A549 (cell line): ENCODE measurements at regions of chr6 and their contacts with region 1.

Region 1: GRCh38 chr6:722077-722524 is 29.2 kb upstream of the EXOC2 start:
- DNase-seq: peak; percentile 78 to 79
- ATAC-seq: peak; percentile 90 to 97
- H3K4me3 ChIP-seq: no peak overlapping the region
- H3K27ac ChIP-seq: no peak overlapping the region
- H3K4me1 ChIP-seq: no peaks in the 10 kb centered on the region
- CTCF ChIP-seq: peak; percentile 78
- EP300 ChIP-seq: no peak
- POLR2A ChIP-seq: no peak
- RAD21 ChIP-seq: peak; percentile 51 to 54; a peak in 4 of 5 replicates

Region 2: GRCh38 chr6:313087-313486 is 409.0 kb before region 1 on chr6:
- CTCF ChIA-PET with region 1: no interaction called
- POLR2A ChIA-PET with region 1: no interaction called
- DNase-seq: no peak
- ATAC-seq: no peak
- H3K4me3 ChIP-seq: no peak overlapping the region
- H3K27ac ChIP-seq: no peak overlapping the region
- H3K4me1 ChIP-seq: no peaks in the 10 kb centered on the region
- CTCF ChIP-seq: no peak
- EP300 ChIP-seq: no peak
- POLR2A ChIP-seq: no peak
- RAD21 ChIP-seq: no peak

Region 3: GRCh38 chr6:701700-702479 is 20.2 kb before region 1 on chr6:
- CTCF ChIA-PET with region 1: interaction called, 33 read pairs
- POLR2A ChIA-PET with region 1: no interaction called
- DNase-seq: no peak
- ATAC-seq: peak in 1 of 2 experiments; percentile 45; a peak in 1 of 6 replicates
- H3K4me3 ChIP-seq: no peak overlapping the region
- H3K27ac ChIP-seq: no peak overlapping the region
- H3K4me1 ChIP-seq: 0 out of 3 replicates have a peak, but pooled peaks cover 4% of the 10 kb centered on the region
- CTCF ChIP-seq: no peak
- EP300 ChIP-seq: no peak
- POLR2A ChIP-seq: no peak
- RAD21 ChIP-seq: no peak

Region 4: GRCh38 chr6:710601-711571 is 11.2 kb before region 1 on chr6:
- CTCF ChIA-PET with region 1: interaction called, 21 read pairs
- POLR2A ChIA-PET with region 1: no interaction called
- DNase-seq: peak; percentile 18 to 19
- ATAC-seq: peak; percentile 88 to 95
- H3K4me3 ChIP-seq: peak overlapping the region; percentile 33
- H3K27ac ChIP-seq: peak overlapping the region; percentile 19 to 86; a peak in 5 of 6 replicates
- H3K4me1 ChIP-seq: no peaks in the 10 kb centered on the region
- CTCF ChIP-seq: no peak
- EP300 ChIP-seq: no peak
- POLR2A ChIP-seq: peak; percentile 14; the same call in 1 of the 2 replicates
- RAD21 ChIP-seq: no peak

Region 5: DNA sequence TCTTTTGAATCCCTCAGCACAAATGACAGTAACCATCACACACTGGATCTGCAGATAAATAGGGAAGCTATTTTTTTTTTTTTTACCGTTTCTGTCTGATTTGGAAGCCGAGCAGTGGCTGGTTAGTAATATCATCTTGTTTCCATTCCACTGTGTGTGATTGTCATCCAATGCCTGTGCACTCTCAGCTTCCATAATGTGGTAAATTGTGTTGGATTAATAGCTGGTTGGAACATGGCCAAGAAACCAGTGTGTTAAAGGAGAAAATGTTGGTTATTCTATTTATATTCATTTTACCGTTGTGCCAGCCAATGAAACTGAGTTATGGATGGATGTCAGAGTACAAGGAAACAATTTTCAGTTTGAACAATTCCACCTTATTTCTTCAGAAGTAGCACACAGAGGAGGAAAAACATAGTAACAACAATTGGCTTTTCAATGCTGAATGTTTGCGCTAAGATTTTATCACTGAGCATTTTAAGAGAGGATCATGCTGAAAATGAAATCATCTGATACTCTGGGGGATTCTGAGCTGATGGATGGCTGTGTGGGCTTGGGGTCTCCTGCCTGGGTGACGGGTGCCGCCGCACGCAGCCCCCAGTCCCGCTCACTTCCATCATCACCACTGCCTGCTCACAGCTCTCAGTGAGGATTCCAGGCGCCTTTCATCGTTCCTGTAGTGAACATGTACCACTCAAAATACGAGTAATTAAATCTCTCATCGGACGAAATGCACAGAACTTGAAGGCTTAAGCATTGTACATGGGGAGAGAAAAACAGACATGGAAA is 11.5 kb after region 1 on chr6:
- CTCF ChIA-PET with region 1: interaction called, 10 read pairs
- POLR2A ChIA-PET with region 1: no interaction called
- DNase-seq: no peak
- ATAC-seq: no peak
- H3K4me3 ChIP-seq: no peak overlapping the region
- H3K27ac ChIP-seq: no peak overlapping the region
- H3K4me1 ChIP-seq: no peaks in the 10 kb centered on the region
- CTCF ChIP-seq: no peak
- EP300 ChIP-seq: no peak
- POLR2A ChIP-seq: no peak
- RAD21 ChIP-seq: no peak